ENCODE measurements at regions of chr1 and their contacts with region 1.

Region 1: DNA sequence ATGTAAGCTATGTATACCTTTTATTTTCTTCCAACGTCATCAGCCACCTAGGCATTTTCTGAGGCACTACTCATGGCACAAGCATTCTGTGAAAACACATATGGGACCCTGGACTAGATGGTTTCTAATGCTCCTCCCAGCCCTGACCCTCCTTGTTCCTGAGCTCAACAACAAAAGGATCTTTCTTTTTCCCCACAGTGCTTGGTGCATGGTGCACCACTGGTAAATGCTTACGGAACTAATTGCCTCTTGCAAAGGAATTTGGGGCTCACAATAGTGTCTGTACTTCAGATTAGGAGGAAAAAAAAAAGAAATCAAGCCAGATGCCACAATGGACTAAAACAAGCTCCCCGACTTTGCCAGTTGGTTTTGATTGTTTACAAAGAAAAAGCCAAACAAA is 390.5 kb downstream of the PLPP3 start:
- H3K4me3 ChIP-seq: no peak overlapping the region
- H3K27ac ChIP-seq: no peak overlapping the region
- H3K4me1 ChIP-seq: peaks cover 3% of the 10 kb centered on the region; the same call in 1 of the 2 replicates
- CTCF ChIP-seq: no peak

Region 2: GRCh38 chr1:56145581-56145980 is 43.3 kb before region 1 on chr1:
- CTCF ChIA-PET with region 1: interaction called, 11 read pairs
- POLR2A ChIA-PET with region 1: no interaction called
- H3K4me3 ChIP-seq: no peak overlapping the region
- H3K27ac ChIP-seq: no peak overlapping the region
- H3K4me1 ChIP-seq: no peaks in the 10 kb centered on the region
- CTCF ChIP-seq: no peak

Region 3: GRCh38 chr1:56169856-56170255 is 19.0 kb before region 1 on chr1:
- CTCF ChIA-PET with region 1: no interaction called
- POLR2A ChIA-PET with region 1: no interaction called
- H3K4me3 ChIP-seq: no peak overlapping the region
- H3K27ac ChIP-seq: no peak overlapping the region
- H3K4me1 ChIP-seq: no peaks in the 10 kb centered on the region
- CTCF ChIP-seq: no peak